ENCODE measurements at regions of chr2 and their contacts with region 1.

Region 1: GRCh38 chr2:203871371-203871983 is 3.9 kb downstream of the CTLA4 start:
- DNase-seq: peak; percentile 72
- ATAC-seq: peak; percentile 70
- H3K4me3 Mint-ChIP-seq: peak overlapping the region; percentile 78
- H3K27ac Mint-ChIP-seq: peak overlapping the region; percentile 97
- H3K4me1 Mint-ChIP-seq: peaks cover 87% of the 10 kb centered on the region
- H3K27me3 Mint-ChIP-seq: no peaks in the 10 kb centered on the region

Region 2: GRCh38 chr2:203687165-203687564 is 184.3 kb before region 1 on chr2:
- CTCF ChIA-PET with region 1: no interaction called
- POLR2A ChIA-PET with region 1: no interaction called
- DNase-seq: no peak
- ATAC-seq: no peak
- H3K4me3 Mint-ChIP-seq: no peak overlapping the region
- H3K27ac Mint-ChIP-seq: no peak overlapping the region
- H3K4me1 Mint-ChIP-seq: peaks cover 24% of the 10 kb centered on the region
- H3K27me3 Mint-ChIP-seq: no peaks in the 10 kb centered on the region

Region 3: GRCh38 chr2:203706403-203706802 is 165.1 kb before region 1 on chr2 and contains the start of gene CD28:
- CTCF ChIA-PET with region 1: no interaction called
- POLR2A ChIA-PET with region 1: interaction called, 34 read pairs
- DNase-seq: peak; percentile 95
- ATAC-seq: peak; percentile 81
- H3K4me3 Mint-ChIP-seq: peak within 1 kb of the TSS; percentile 72
- H3K27ac Mint-ChIP-seq: peak within 1 kb of the TSS; percentile 87
- H3K4me1 Mint-ChIP-seq: peaks cover 66% of the 10 kb centered on the region
- H3K27me3 Mint-ChIP-seq: no peaks in the 10 kb centered on the region
- total RNA-seq, gene CD28: 25.6 to 27.2 TPM

Region 4: GRCh38 chr2:203740780-203741281 is 130.6 kb before region 1 on chr2:
- CTCF ChIA-PET with region 1: interaction called, 9 read pairs
- POLR2A ChIA-PET with region 1: interaction called, 24 read pairs
- DNase-seq: peak; percentile 57
- ATAC-seq: peak; percentile 83
- H3K4me3 Mint-ChIP-seq: peak overlapping the region; percentile 61
- H3K27ac Mint-ChIP-seq: peak overlapping the region; percentile 94
- H3K4me1 Mint-ChIP-seq: peaks cover 75% of the 10 kb centered on the region
- H3K27me3 Mint-ChIP-seq: no peaks in the 10 kb centered on the region

Region 5: DNA sequence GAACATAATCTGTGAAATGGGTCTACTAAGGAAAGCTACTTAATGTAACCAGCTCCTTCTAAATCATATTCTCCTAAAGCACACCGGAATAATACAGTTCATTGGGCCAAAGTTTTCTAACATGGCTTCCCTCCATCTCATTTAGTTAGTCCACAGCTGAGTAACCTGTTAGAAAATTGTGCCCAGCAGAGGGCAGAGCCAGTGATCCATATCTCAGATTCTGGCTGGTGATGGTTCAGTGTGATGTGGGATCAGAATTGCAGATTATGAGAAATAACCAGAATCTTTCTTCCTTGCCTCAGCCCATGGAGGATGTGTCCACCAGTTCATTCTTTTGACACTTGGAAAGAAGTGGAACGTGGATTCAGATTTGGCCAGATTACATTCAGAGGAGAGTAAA is 13.3 kb before region 1 on chr2:
- CTCF ChIA-PET with region 1: interaction called, 29 read pairs
- POLR2A ChIA-PET with region 1: interaction called, 28 read pairs
- DNase-seq: no peak
- ATAC-seq: peak; percentile 56
- H3K4me3 Mint-ChIP-seq: no peak overlapping the region
- H3K27ac Mint-ChIP-seq: no peak overlapping the region
- H3K4me1 Mint-ChIP-seq: peaks cover 56% of the 10 kb centered on the region
- H3K27me3 Mint-ChIP-seq: no peaks in the 10 kb centered on the region

Region 6: GRCh38 chr2:203891474-203891873 is 20.0 kb after region 1 on chr2:
- CTCF ChIA-PET with region 1: interaction called, 9 read pairs
- POLR2A ChIA-PET with region 1: interaction called, 14 read pairs
- DNase-seq: peak; percentile 40
- ATAC-seq: peak; percentile 78
- H3K4me3 Mint-ChIP-seq: no peak overlapping the region
- H3K27ac Mint-ChIP-seq: no peak overlapping the region
- H3K4me1 Mint-ChIP-seq: peaks cover 42% of the 10 kb centered on the region
- H3K27me3 Mint-ChIP-seq: no peaks in the 10 kb centered on the region

Region 7: DNA sequence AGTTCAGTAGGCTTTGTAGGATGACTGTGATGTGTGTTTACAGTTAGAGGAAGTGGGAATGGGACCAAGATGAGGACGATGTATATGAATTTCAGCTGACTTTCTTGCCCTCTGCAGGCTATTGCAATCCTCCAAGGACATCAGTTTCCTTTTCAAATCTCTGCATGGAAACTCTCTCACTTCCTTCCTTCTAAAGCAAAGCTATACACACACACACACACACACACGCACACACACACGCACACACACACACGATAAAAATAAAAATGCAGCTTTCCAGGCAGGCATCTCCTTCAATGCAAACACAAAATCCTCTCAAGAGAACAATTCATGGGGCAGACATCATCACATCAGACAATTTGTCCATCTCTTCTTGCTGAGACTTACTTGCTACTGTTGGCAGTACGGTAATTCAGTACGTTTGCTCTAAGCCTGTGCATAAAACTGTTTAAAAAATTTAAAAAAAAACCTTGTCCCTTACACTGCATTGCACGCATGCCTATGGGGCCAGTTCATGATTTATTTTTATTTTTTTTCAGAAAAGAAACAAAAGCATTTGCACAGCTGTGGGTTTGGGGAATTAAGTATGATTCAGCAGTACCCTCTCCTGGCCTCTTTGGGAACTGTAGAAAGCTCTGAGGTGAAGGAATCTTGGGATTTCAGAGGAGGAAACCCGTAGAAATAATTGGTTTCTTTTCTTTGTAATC is 37.9 kb after region 1 on chr2:
- CTCF ChIA-PET with region 1: interaction called, 35 read pairs
- POLR2A ChIA-PET with region 1: interaction called, 3 read pairs
- DNase-seq: no peak
- ATAC-seq: peak; percentile 67
- H3K4me3 Mint-ChIP-seq: no peak overlapping the region
- H3K27ac Mint-ChIP-seq: no peak overlapping the region
- H3K4me1 Mint-ChIP-seq: peaks cover 21% of the 10 kb centered on the region
- H3K27me3 Mint-ChIP-seq: peaks cover 8% of the 10 kb centered on the region

Region 8: DNA sequence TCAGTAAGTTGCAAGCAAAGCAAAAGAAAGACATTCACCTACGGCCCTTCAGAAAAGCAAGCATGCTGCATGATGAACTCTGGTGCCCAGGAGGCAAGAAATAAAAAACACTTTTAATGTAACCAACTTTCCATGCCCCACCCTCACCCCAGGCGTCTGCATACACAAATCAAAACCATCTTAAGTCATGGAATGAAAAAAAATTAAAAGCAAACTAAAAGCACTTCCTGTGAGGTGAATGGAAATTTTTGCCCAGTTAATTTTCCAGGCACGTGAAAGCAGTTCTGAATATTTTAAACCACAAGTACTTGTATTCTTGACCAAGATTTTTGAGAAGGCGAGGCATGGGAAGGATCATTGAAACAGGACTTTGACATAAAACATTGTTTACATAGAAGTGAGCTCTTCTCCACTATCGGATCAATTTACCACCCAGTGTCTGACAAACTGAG is 62.6 kb after region 1 on chr2:
- CTCF ChIA-PET with region 1: no interaction called
- POLR2A ChIA-PET with region 1: interaction called, 24 read pairs
- DNase-seq: peak; percentile 51
- ATAC-seq: peak; percentile 59
- H3K4me3 Mint-ChIP-seq: peak overlapping the region; percentile 55
- H3K27ac Mint-ChIP-seq: peak overlapping the region; percentile 89
- H3K4me1 Mint-ChIP-seq: peaks cover 38% of the 10 kb centered on the region
- H3K27me3 Mint-ChIP-seq: no peaks in the 10 kb centered on the region

Region 9: DNA sequence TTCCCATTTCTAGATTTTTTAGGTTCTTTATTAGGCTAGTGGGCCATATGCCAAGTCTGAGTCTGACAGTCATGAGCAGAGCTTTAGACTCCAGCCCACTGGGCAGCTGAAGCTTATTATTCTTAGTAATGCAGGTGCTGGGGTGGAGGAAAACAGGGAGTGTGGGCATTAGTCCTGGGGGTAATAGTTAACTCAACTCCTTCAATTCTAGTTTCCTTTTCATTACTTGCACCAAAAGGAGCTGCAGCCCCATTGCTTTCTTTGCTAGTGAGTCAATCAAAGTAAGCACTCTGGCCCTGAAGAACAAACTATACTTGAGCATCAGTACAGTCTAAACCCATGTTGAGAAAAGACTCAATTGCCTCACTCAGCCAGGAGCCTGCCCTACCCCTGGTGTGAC is 100.6 kb after region 1 on chr2:
- CTCF ChIA-PET with region 1: no interaction called
- POLR2A ChIA-PET with region 1: no interaction called
- DNase-seq: no peak
- ATAC-seq: no peak
- H3K4me3 Mint-ChIP-seq: no peak overlapping the region
- H3K27ac Mint-ChIP-seq: no peak overlapping the region
- H3K4me1 Mint-ChIP-seq: no peaks in the 10 kb centered on the region
- H3K27me3 Mint-ChIP-seq: no peaks in the 10 kb centered on the region